Right ventricle myocardium superior (tissue), 1 donor: ENCODE measurements at regions of chr16 and their contacts with region 1.

Region 1: GRCh38 chr16:59864981-59865666 is 1131.0 kb upstream of the GOT2 start:
- DNase-seq: no peak
- ATAC-seq: no peak

Region 2: GRCh38 chr16:59913666-59914065 is 48.5 kb after region 1 on chr16:
- intact Hi-C with region 1: loop called (anchors 2 kb)
- DNase-seq: no peak
- ATAC-seq: no peak